ENCODE measurements at regions of chr2 and their contacts with region 1.

Region 1: DNA sequence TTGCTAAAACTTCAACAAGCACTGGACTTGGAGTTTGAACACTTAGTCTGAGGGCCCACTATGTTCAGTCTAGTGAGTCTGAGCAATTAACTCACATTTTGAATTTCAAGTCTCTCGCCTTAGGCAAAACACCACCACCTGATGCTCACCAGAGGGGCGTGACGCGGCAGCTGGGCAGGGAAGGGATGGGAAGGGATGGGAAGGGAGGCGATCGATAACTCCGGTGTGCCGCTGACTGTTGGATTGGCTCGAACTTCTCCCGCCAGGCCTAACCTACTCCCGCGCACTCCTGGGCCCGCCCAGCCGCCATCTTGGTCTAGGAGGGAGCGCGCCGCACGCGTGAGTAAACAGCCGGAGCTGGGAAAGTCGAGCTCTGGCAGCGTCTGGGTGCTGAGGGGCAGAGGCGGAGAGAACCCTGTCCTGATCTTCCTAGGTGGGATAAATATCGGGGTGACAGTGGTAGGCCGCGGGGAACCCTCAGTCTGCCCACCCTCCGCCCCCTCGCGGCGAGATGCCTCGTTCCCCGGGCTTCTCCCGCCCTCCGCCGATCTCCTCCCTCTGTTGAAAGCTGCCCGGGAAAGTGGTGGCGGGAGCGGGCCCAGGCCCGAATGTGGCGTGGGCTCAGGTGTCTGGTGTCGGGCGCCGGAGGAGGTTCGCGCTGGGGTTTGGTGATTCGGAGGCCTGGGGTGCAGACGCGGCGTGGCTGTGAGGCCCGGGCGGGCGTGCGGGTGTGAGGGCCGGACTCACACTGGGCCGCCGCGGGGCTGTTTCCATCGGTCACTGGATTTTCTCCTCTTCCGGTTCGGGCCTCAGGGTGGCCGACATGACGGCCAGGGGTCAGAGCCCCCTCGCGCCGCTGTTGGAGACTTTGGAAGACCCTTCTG is at the start of gene RIF1:
- DNase-seq: peak; percentile 37
- H3K4me3 ChIP-seq: peak within 1 kb of the TSS; percentile 75 to 98 (median 88)
- H3K27ac ChIP-seq: peak within 1 kb of the TSS; percentile 85 to 97 (median 92)
- H3K4me1 ChIP-seq: peaks cover 0 to 31% (median 10%) of the 10 kb centered on the region in 3 donors
- H3K27me3 ChIP-seq: no peaks in the 10 kb centered on the region
- CTCF ChIP-seq: peak; percentile 40 to 75 (median 67)
- POLR2A ChIP-seq: peak in 2 of 4 donors; percentile 32 to 38
- total RNA-seq, gene RIF1: 14.4 to 41.4 (median 24.4) TPM

Region 2: GRCh38 chr2:150997702-150998440 is 412.0 kb before region 1 on chr2:
- intact Hi-C with region 1: no loop called
- DNase-seq: no peak
- H3K4me3 ChIP-seq: no peak overlapping the region
- H3K27ac ChIP-seq: no peak overlapping the region
- H3K4me1 ChIP-seq: peaks cover 0 to 10% (median 0%) of the 10 kb centered on the region in 3 donors
- H3K27me3 ChIP-seq: no peaks in the 10 kb centered on the region
- CTCF ChIP-seq: no peak
- POLR2A ChIP-seq: no peak

Region 3: GRCh38 chr2:151289369-151290088 is 120.3 kb before region 1 on chr2 and contains the start of gene NMI:
- intact Hi-C with region 1: loop called (anchors 10 kb)
- DNase-seq: peak; percentile 27
- H3K4me3 ChIP-seq: peak within 1 kb of the TSS; percentile 79 to 95 (median 90)
- H3K27ac ChIP-seq: peak within 1 kb of the TSS; percentile 96 to 99 (median 98)
- H3K4me1 ChIP-seq: peaks cover 6 to 40% (median 16%) of the 10 kb centered on the region in 3 donors
- H3K27me3 ChIP-seq: no peaks in the 10 kb centered on the region
- CTCF ChIP-seq: peak in 1 of 6 experiments; percentile 7
- POLR2A ChIP-seq: peak in 2 of 4 donors; percentile 33 to 45
- total RNA-seq, gene NMI: 10.3 to 13.7 (median 10.8) TPM

Measured in esophagus squamous epithelium (tissue), 5 donors.